Ovary (tissue), 10 donors: ENCODE measurements at regions of chr13 and their contacts with region 1.

Region 1: GRCh38 chr13:113364311-113364889 is 470 bp upstream of the GRTP1 start:
- DNase-seq: peak in 2 of 5 donors; percentile 69 to 77
- H3K4me3 ChIP-seq: peak overlapping the region; percentile 48
- H3K27ac ChIP-seq: peak overlapping the region; percentile 66 to 80
- H3K4me1 ChIP-seq: peaks cover 15% of the 10 kb centered on the region
- H3K27me3 ChIP-seq: no peaks in the 10 kb centered on the region
- CTCF ChIP-seq: no peak
- EP300 ChIP-seq: no peak
- POLR2A ChIP-seq: no peak

Region 2: DNA sequence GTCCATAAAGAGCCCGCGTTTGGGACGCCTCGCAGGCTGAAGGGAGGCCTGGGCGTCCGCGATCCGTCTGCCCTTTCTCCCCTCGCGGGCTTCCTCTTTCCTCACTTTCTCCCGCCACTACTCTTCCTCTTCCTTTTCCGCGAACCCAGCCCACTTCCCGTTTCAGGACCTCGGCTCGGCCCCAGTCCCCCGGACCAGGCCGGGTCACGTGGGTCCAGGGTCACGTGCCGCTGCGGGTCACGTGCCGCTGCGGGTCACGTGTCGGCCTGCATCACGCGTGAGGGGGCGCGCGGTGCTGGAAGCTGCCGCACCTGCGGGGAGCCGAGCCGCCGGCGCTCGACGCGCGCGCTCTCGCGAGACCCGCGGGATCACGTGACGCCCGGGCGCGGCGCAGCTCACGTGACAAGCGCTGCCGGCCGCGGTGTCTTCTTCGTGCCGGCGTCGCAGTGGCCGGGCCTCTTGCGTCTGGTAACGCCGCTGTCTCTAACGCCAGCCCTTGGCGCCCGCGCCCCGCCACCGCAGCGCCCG is 67.5 kb before region 1 on chr13 and contains the start of gene LAMP1:
- intact Hi-C with region 1: loop called in 1 of 4 experiments (anchors 2 kb)
- DNase-seq: peak; percentile 98 to 100 (median 100)
- H3K4me3 ChIP-seq: peak within 1 kb of the TSS; percentile 95
- H3K27ac ChIP-seq: peak within 1 kb of the TSS; percentile 71 to 85
- H3K4me1 ChIP-seq: peaks cover 6% of the 10 kb centered on the region
- H3K27me3 ChIP-seq: no peaks in the 10 kb centered on the region
- CTCF ChIP-seq: peak in 2 of 3 donors; percentile 19 to 52
- EP300 ChIP-seq: peak; percentile 88
- POLR2A ChIP-seq: peak; percentile 57
- total RNA-seq, gene LAMP1: 51.7 to 167 (median 144) TPM